ENCODE measurements at regions of chr5 and their contacts with region 1.

Region 1: GRCh38 chr5:5340206-5340729 is 82.2 kb upstream of the ICE1 start:
- DNase-seq: peak; percentile 95
- ATAC-seq: peak; percentile 73
- H3K4me3 ChIP-seq: no peak overlapping the region
- H3K27ac ChIP-seq: peak overlapping the region; percentile 69
- H3K4me1 ChIP-seq: peaks cover 57% of the 10 kb centered on the region
- H3K27me3 ChIP-seq: no peaks in the 10 kb centered on the region
- CTCF ChIP-seq: peak; percentile 76

Region 2: GRCh38 chr5:5270958-5271605 is 69.2 kb before region 1 on chr5:
- CTCF ChIA-PET with region 1: no interaction called
- POLR2A ChIA-PET with region 1: no interaction called
- intact Hi-C with region 1: loop called (anchors 1 kb)
- DNase-seq: peak; percentile 96
- ATAC-seq: peak; percentile 100
- H3K4me3 ChIP-seq: peak overlapping the region; percentile 48
- H3K27ac ChIP-seq: peak overlapping the region; percentile 57
- H3K4me1 ChIP-seq: peaks cover 16% of the 10 kb centered on the region
- H3K27me3 ChIP-seq: no peaks in the 10 kb centered on the region
- CTCF ChIP-seq: peak; percentile 14; the same call in 1 of the 2 replicates

Region 3: GRCh38 chr5:5288201-5288600 is 52.1 kb before region 1 on chr5:
- CTCF ChIA-PET with region 1: no interaction called
- POLR2A ChIA-PET with region 1: no interaction called
- intact Hi-C with region 1: loop called (anchors 2 kb)
- DNase-seq: peak; percentile 95
- ATAC-seq: peak; percentile 93
- H3K4me3 ChIP-seq: peak overlapping the region; percentile 14; the same call in 1 of the 2 replicates
- H3K27ac ChIP-seq: peak overlapping the region; percentile 95
- H3K4me1 ChIP-seq: peaks cover 43% of the 10 kb centered on the region
- H3K27me3 ChIP-seq: no peaks in the 10 kb centered on the region
- CTCF ChIP-seq: no peak